Posterior vena cava (tissue), 2 donors: ENCODE measurements at regions of chr13 and their contacts with region 1.

Region 1: GRCh38 chr13:35860661-35861060 is 270.5 kb downstream of the DCLK1 start:
- DNase-seq: no peak

Region 2: GRCh38 chr13:34867590-34867989 is 993.1 kb before region 1 on chr13:
- intact Hi-C with region 1: no loop called
- DNase-seq: no peak

Region 3: DNA sequence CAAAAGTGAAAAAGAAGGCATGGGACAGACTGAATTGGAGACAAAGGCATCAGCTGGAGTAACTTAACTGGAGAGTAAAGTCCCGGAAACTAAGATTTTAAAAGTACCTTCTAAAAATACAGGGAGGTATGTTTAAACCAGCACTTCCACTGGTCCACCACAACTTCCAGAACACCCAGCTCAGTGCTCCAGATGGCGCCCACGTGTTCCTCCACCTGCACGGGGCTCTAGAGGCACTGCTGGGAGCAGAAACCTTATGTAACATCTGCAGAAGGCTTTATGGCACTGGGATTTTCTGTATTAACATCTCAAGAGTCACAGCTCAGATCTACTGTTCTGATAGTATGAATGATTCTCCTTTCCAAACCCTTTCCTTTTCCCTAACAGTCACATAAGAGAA is 18.4 kb after region 1 on chr13:
- intact Hi-C with region 1: loop called in 1 of 2 experiments (anchors 2 kb)
- DNase-seq: no peak